ENCODE measurements at regions of chr6 and their contacts with region 1.

Region 1: DNA sequence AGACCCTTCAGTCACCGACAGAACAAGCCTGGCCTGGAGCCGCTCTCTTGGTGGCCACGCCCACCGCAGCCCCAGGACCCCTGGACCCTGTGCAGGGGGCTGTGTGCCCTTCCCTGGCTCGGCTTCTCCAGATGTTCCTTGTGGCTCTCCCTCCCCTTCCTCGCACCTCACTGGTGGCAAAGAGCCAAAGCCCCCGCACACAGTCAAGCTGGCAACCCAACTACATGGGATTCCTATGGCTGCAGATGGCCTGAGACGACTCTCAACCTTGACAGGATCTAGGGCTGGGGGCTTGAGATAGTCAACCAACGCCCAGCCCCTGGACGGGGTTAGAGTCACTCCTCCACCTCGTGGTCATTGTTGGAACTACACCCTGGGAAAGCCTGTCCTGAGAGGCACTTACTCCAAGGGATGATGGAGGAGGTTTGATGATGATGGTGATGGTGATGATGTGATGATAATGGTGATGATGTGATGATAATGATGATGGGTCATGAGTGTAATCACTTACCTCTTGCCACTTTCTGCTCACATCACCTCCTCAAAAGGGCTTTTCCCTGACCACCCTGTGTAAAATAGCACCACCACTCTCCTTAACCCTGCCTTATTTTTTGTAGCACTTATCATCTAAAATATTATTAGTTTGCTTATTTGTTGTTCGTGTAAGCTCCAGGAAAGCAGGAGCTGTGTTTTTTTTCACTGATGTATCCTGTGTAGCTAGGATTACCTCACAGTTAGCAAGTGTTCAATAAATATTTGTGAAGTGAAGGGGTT is 278.4 kb downstream of the LRFN2 start:
- DNase-seq: peak; percentile 73
- CTCF ChIP-seq: peak; percentile 82

Region 2: GRCh38 chr6:39361657-39362486 is 946.8 kb before region 1 on chr6:
- CTCF ChIA-PET with region 1: interaction called, 23 read pairs
- POLR2A ChIA-PET with region 1: no interaction called
- DNase-seq: peak; percentile 81
- CTCF ChIP-seq: peak; percentile 80

Region 3: DNA sequence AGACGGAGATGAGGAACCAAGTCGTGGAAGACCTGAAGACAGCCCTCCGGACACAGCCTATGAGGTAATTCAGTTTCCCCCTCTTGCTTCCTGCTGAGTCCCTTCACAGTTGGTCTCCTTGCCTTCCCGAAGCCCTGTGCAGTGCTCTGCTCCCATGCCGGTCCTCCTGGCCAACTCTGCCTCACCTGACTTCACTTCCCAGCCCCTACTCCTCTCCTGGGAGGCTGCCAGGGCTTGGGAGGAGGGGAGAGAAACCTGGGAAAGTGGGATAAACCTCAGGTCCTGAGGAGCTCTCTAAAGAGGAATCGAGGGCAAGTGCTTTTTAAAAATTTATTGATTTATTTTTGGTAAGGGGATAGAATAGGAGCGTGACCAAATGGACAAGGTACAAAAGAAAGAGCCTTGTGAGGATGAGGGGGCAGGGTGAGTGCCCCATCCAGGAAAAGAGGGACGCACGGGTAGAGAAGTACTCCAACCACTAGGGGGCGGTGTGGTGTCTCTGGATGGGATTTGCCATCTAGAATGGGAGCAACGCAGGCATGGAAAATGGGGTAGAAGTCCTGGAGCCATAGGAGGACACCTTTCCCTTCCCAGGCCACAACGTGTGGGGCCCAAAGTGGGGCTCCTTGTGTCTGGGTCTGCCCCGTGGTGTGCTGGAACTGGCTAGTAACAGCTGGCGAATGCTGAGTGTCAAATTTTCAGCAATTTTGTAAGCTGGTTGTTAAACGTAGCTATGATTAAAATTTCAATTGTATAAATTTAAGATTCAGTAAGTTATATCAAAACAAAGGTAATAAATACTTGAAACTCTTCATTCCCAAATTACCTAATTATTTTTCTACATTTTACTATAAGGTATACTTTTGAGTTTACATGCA is 443.5 kb before region 1 on chr6:
- CTCF ChIA-PET with region 1: interaction called, 10 read pairs
- POLR2A ChIA-PET with region 1: no interaction called
- DNase-seq: peak; percentile 75
- CTCF ChIP-seq: peak; percentile 81

Region 4: GRCh38 chr6:39980839-39981580 is 327.7 kb before region 1 on chr6:
- CTCF ChIA-PET with region 1: interaction called, 10 read pairs
- POLR2A ChIA-PET with region 1: no interaction called
- DNase-seq: peak; percentile 28
- CTCF ChIP-seq: peak; percentile 38

Region 5: DNA sequence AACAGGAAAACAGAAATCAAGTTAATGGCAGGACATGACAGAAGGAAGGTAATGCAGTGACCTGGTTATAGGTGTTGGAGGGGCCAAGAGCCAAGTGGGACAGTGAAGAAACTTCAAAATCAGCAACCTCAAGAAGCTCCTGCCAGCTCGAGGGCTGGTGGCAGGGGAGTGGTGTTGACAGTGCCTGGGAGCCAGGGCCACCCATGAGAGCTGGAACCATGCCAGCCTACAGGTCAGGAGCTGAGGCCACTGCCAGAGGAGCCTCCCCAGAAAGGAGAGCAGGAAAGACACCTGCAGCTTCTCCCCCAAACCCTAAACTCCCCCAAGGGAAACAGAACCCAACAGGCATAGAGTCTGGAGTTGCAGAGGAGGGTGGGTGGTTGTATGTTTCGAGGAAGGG is 16.3 kb after region 1 on chr6:
- CTCF ChIA-PET with region 1: interaction called, 19 read pairs
- POLR2A ChIA-PET with region 1: no interaction called
- DNase-seq: no peak
- CTCF ChIP-seq: no peak

Measured in GM10248 (cell line).